ENCODE measurements at regions of chr2 and their contacts with region 1.

Region 1: DNA sequence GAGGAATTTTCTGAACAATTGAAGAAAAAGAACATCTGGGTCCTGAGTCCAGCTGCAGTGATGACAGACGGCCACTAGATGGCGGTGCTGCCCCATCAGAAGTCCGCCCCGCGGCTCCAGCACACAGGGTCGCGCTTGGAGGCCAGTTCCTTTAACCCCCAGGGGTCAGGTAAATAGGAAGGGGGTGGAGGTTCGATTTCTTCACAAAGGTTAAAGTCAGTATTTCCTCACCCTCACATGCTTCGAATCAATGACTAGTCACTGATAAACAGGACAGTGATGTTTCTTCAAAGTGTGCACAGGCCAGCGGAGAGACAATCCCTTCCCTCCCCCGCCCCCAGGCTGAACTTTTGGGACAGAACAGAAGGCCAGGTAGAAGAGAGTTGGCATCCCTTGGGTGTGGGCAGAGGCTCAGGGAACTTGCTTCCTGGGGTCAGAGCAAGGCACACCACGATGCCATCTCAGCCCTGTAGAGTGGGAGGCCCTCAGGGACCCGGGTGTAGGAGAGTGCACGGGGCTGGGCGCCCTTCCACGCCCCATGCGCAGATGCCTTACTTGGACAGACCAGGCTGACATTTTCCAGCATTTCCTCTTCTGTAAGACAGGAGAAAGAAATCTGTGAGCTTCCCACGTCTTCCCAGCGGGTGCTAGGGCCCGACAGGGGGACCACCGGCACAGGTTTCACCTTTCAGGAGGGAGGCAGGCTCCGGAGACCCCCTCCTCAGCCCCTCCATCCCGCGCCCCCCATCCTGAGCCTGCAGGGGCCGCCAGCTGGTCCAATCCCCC is 722 bp downstream of the APOB start:
- DNase-seq: no peak
- H3K4me3 ChIP-seq: no peak overlapping the region
- H3K27me3 ChIP-seq: no peaks in the 10 kb centered on the region
- CTCF ChIP-seq: peak; percentile 98

Region 2: GRCh38 chr2:21055879-21056790 is 13.0 kb after region 1 on chr2:
- CTCF ChIA-PET with region 1: interaction called, 11 read pairs
- POLR2A ChIA-PET with region 1: no interaction called
- DNase-seq: no peak
- H3K4me3 ChIP-seq: no peak overlapping the region
- H3K27me3 ChIP-seq: no peaks in the 10 kb centered on the region
- CTCF ChIP-seq: no peak

Region 3: GRCh38 chr2:21118302-21118920 is 75.3 kb after region 1 on chr2:
- CTCF ChIA-PET with region 1: interaction called, 25 read pairs
- POLR2A ChIA-PET with region 1: no interaction called
- DNase-seq: no peak
- H3K4me3 ChIP-seq: no peak overlapping the region
- H3K27me3 ChIP-seq: no peaks in the 10 kb centered on the region
- CTCF ChIP-seq: peak; percentile 46